ENCODE measurements at regions of chr17 and their contacts with region 1.

Region 1: GRCh38 chr17:56602292-56603130 is 9.0 kb downstream of the NOG start:
- DNase-seq: no peak
- ATAC-seq: no peak
- H3K4me3 ChIP-seq: no peak overlapping the region
- H3K27ac ChIP-seq: no peak overlapping the region
- H3K4me1 ChIP-seq: no peaks in the 10 kb centered on the region
- H3K27me3 ChIP-seq: no peaks in the 10 kb centered on the region

Region 2: DNA sequence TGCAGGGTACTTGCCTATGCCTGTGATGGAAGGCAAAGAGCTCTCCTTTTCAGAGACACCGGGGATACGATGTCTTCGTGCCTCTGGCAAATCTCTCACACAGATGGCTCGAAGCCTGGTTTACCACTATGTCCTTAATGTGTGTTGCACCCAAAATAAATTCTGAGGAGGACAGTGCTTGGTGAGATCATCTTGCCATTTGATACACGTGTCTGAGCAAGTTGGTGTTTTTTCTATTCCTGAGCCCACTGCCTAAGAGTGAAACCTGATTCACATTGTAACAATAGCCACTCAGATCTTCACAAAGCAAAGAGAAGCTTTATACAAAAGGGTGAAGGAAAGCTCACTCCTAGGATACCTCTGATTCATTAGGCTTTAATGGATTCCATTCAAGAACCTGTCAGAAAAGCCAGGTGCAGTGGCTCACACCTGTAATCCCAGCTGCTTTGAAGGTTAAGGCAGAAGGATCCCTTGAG is 449.4 kb after region 1 on chr17:
- intact Hi-C with region 1: loop called in 1 of 2 experiments (anchors 10 kb)
- DNase-seq: no peak
- ATAC-seq: no peak
- H3K4me3 ChIP-seq: no peak overlapping the region
- H3K27ac ChIP-seq: no peak overlapping the region
- H3K4me1 ChIP-seq: peaks cover 0 to 4% of the 10 kb centered on the region in 2 donors
- H3K27me3 ChIP-seq: no peaks in the 10 kb centered on the region